PC-9 (cell line): ENCODE measurements at regions of chr13 and their contacts with region 1.

Region 1: DNA sequence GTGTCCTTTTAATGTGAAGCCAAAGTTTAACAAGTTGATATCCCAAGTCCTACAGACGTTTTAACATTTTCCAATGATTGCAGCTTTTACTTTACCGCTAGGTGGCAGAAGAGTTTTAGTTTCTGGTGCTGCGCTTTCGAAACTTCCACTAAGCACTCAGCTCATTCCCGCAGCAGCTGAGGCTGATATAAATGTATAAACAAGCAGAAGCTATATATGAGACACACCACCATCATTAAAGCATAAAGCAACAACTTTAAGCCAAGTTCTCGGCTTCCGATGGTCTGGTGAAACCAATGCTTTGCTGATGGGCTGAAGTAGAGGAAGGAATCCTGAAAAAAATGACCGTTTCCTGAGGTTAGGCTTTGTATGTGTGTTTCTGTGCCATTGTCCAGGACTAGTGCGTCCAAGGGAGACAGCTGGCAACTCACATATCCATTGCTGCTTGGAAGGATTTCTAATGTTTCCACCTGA is 753.9 kb downstream of the OLFM4 start:
- DNase-seq: peak; percentile 7 to 38
- H3K4me3 ChIP-seq: no peak overlapping the region
- H3K27ac ChIP-seq: no peak overlapping the region
- H3K4me1 ChIP-seq: no peaks in the 10 kb centered on the region
- H3K27me3 ChIP-seq: no peaks in the 10 kb centered on the region
- CTCF ChIP-seq: peak; percentile 85

Region 2: DNA sequence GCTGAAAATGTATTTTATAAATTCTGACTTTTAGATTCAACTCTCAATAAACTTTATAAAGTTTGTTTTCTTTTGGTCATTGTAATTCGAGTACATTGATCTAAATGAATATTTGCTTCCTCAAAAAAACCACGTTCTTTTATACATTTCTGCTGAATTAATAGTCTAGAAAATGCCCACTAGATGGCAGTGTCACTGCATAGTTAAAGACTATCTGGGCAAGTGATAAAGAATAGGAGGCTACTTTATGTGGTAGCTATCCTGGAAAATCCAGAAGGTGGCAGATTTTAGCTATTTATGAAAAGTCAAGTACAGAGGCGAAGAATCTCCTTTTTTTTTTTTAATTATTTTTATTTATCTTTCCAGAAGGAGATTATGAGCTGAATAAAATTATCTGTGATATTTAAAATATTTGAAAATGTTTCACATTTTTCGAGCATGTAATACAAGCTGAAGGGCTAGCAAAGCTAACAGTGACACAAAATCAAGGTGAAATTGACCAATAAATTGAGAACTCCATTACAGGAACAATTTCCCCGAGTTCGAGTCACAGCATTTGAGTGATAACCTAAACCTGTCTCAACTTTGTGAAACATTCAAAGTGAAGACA is 532.2 kb before region 1 on chr13:
- CTCF ChIA-PET with region 1: interaction called, 3 read pairs
- POLR2A ChIA-PET with region 1: no interaction called
- intact Hi-C with region 1: loop called (anchors 5 kb)
- DNase-seq: peak; percentile 4 to 69
- H3K4me3 ChIP-seq: no peak overlapping the region
- H3K27ac ChIP-seq: no peak overlapping the region
- H3K4me1 ChIP-seq: no peaks in the 10 kb centered on the region
- H3K27me3 ChIP-seq: no peaks in the 10 kb centered on the region
- CTCF ChIP-seq: peak; percentile 85

Region 3: GRCh38 chr13:54402495-54402894 is 620.0 kb after region 1 on chr13:
- CTCF ChIA-PET with region 1: no interaction called
- POLR2A ChIA-PET with region 1: no interaction called
- intact Hi-C with region 1: no loop called
- DNase-seq: no peak
- H3K4me3 ChIP-seq: no peak overlapping the region
- H3K27ac ChIP-seq: no peak overlapping the region
- H3K4me1 ChIP-seq: no peaks in the 10 kb centered on the region
- H3K27me3 ChIP-seq: no peaks in the 10 kb centered on the region
- CTCF ChIP-seq: no peak